ENCODE measurements at regions of chr5 and their contacts with region 1.

Region 1: DNA sequence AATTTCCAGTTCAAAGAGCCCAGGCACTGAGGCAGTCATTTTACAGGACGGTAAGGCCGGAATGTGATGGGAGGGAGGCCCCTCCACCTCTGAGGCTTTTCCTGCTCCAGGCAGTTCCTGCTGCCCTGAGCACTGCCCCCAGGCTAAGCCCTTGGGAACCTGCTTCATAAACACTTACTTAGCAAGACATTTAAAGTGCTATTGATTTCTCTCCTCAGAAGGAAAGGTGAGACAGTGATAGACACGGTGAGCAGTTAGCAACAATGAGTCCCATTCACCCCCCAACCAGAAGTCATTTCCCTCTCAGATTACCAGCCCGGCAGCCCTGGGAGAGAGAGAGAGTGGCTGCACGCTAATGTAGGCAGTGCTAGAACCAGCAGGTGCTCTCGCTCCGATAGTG is 462.5 kb downstream of the SPOCK1 start:
- DNase-seq: peak in 1 of 2 experiments; percentile 61
- H3K4me3 ChIP-seq: no peak overlapping the region
- H3K27ac ChIP-seq: no peak overlapping the region
- H3K4me1 ChIP-seq: peaks cover 2 to 18% (median 12%) of the 10 kb centered on the region in 4 experiments; a peak in 4 of 7 replicates
- H3K27me3 ChIP-seq: no peaks in the 10 kb centered on the region
- CTCF ChIP-seq: no peak
- EP300 ChIP-seq: no peak
- POLR2A ChIP-seq: no peak
- RAD21 ChIP-seq: no peak

Region 2: DNA sequence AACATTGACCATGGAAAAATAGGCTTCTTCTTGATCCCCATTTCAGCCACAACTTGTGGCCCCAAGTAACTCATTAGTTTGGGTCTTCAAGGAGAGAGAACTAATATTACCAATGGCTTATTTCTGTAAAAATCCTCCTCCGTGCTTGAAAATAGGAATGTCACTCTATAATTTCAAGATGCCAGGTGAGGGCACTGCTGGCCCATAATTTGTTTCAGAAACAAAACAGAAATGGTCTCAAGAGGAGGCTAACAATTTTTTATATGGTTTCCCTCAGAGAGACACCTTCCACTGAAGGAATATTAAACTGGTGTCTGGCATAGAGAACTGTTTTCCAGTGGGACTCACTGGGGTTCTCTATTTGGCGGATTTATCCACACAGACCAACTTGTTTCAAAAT is 234.3 kb before region 1 on chr5:
- CTCF ChIA-PET with region 1: interaction called, 23 read pairs
- POLR2A ChIA-PET with region 1: no interaction called
- DNase-seq: no peak
- H3K4me3 ChIP-seq: no peak overlapping the region
- H3K27ac ChIP-seq: no peak overlapping the region
- H3K4me1 ChIP-seq: no peaks in the 10 kb centered on the region
- H3K27me3 ChIP-seq: no peaks in the 10 kb centered on the region
- CTCF ChIP-seq: peak in 2 of 3 experiments; percentile 37 to 55; a peak in 3 of 4 replicates
- EP300 ChIP-seq: no peak
- POLR2A ChIP-seq: no peak
- RAD21 ChIP-seq: peak; percentile 82 to 84

Region 3: DNA sequence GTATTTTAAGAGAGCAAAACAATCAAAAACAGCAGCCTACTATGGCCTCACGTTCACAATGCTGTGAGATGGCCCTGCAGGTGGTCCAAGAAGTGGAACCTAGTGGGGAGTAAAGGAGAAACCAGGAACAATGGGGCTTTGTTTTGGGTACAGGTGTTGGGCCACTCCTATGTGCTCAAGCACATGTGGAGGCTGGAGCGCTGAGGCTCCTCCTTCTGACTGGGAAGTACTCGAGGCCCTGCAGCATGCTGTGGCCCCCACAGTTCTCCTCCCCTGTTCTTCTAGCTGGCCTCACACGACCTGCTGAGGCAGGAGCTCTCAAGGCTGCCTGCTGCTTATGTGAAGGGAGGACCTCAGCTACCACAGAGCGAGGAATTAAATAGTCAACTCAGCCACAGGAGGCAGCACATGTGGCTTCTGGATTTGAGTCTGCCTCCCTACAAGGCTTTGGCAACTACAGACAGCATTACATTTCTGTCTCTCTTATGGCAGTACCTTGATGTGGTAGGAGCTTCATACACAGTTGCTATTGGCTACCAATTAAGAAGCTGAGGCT is 19.8 kb before region 1 on chr5:
- CTCF ChIA-PET with region 1: interaction called, 12 read pairs
- POLR2A ChIA-PET with region 1: no interaction called
- DNase-seq: no peak
- H3K4me3 ChIP-seq: no peak overlapping the region
- H3K27ac ChIP-seq: no peak overlapping the region
- H3K4me1 ChIP-seq: no peaks in the 10 kb centered on the region
- H3K27me3 ChIP-seq: no peaks in the 10 kb centered on the region
- CTCF ChIP-seq: peak in 2 of 3 experiments; percentile 13 to 40; a peak in 1 of 4 replicates
- EP300 ChIP-seq: no peak
- POLR2A ChIP-seq: no peak
- RAD21 ChIP-seq: peak; percentile 19 to 29; a peak in 3 of 4 replicates

Region 4: GRCh38 chr5:137026296-137026695 is 10.3 kb before region 1 on chr5:
- CTCF ChIA-PET with region 1: interaction called, 11 read pairs
- POLR2A ChIA-PET with region 1: interaction called, 3 read pairs
- DNase-seq: no peak
- H3K4me3 ChIP-seq: no peak overlapping the region
- H3K27ac ChIP-seq: no peak overlapping the region
- H3K4me1 ChIP-seq: no peaks in the 10 kb centered on the region
- H3K27me3 ChIP-seq: no peaks in the 10 kb centered on the region
- CTCF ChIP-seq: no peak
- EP300 ChIP-seq: no peak
- POLR2A ChIP-seq: no peak
- RAD21 ChIP-seq: no peak

Region 5: GRCh38 chr5:137051165-137051564 is 14.5 kb after region 1 on chr5:
- CTCF ChIA-PET with region 1: interaction called, 22 read pairs
- POLR2A ChIA-PET with region 1: no interaction called
- DNase-seq: no peak
- H3K4me3 ChIP-seq: no peak overlapping the region
- H3K27ac ChIP-seq: no peak overlapping the region
- H3K4me1 ChIP-seq: no peaks in the 10 kb centered on the region
- H3K27me3 ChIP-seq: no peaks in the 10 kb centered on the region
- CTCF ChIP-seq: peak in 2 of 3 experiments; percentile 49 to 74; a peak in 2 of 4 replicates
- EP300 ChIP-seq: no peak
- POLR2A ChIP-seq: no peak
- RAD21 ChIP-seq: peak; percentile 87 to 93

Region 6: DNA sequence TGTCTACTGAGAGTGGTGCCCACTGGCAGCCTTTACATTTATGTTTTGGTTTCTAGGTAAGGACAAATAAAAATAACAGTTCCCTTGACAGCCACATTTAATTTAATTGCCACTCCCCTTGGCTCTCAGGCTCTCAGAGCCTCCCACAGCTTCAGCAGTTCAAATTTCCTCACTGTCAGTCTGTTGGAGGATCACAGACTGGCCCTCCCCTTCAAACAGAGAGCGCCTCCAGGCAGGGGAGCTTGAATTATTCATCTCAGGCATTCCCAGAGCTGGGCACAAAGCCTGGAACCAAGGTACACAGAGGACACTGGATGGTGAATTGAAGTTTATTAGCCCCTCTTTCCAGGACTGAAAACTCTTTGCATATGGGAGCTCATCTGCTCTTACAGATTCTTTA is 54.8 kb after region 1 on chr5:
- CTCF ChIA-PET with region 1: no interaction called
- POLR2A ChIA-PET with region 1: no interaction called
- DNase-seq: no peak
- H3K4me3 ChIP-seq: no peak overlapping the region
- H3K27ac ChIP-seq: no peak overlapping the region
- H3K4me1 ChIP-seq: peaks cover 7 to 14% (median 11%) of the 10 kb centered on the region in 4 experiments
- H3K27me3 ChIP-seq: no peaks in the 10 kb centered on the region
- CTCF ChIP-seq: no peak
- EP300 ChIP-seq: no peak
- POLR2A ChIP-seq: no peak
- RAD21 ChIP-seq: no peak

Measured in H1 (cell line).